ENCODE measurements at regions of chr10 and their contacts with region 1.

Region 1: GRCh38 chr10:97334370-97335175 is at the start of gene FRAT2:
- DNase-seq: peak; percentile 80 to 92 (median 88)
- H3K4me3 ChIP-seq: peak within 1 kb of the TSS; percentile 58 to 99 (median 80)
- H3K27ac ChIP-seq: peak within 1 kb of the TSS; percentile 46 to 99 (median 95)
- H3K27me3 ChIP-seq: no peaks in the 10 kb centered on the region
- CTCF ChIP-seq: peak in 13 of 56 donors; percentile 4 to 43 (median 16)
- total RNA-seq, gene FRAT2: 3.9 to 17.4 (median 9.0) TPM

Region 2: DNA sequence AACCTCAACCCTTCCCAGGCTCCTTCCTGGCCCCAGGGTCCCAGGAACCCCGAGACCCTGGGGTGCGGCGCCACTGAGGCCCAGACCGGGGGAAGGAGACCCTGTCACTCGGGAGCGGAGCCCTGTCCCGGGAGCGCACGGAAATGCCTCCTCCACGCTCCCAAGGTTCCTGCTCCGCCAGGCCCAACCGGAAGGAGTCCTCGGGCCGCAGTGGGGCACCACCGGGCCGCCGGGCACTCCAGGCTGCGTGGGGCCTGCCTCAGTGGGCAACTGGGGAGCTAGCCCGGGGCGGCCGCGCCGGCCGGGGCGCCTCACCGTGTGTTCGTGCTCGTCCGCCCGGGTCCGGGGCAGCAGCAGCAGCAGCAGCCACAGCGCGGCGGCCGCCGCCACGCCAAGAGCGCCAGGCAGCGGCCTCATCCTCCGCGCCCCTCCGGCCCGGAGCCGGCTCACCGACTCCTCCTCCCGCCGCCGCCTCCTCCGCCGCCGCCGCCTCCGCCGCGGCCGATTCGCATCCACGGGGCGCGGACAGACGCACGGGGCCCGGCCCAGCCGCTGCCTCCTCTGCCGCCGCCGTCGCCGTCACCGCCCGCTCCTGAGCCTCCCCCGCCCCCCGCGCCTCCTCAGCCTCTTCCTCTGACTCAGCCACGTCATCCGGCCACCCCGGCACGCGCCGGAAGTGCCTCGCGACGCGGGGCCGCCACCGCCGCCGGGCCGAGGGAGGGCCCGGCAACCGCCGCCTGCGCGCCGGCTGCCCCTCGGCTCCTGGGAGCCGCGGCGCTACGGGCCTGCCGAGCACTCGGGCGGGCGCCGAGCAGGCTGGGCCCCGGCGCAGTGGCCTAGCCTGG is 747.9 kb before region 1 on chr10 and contains the start of gene TM9SF3:
- intact Hi-C with region 1: loop called in 1 of 2 experiments (anchors 10 kb)
- DNase-seq: peak; percentile 78 to 94 (median 88)
- H3K4me3 ChIP-seq: peak within 1 kb of the TSS; percentile 62 to 99 (median 92)
- H3K27ac ChIP-seq: peak within 1 kb of the TSS; percentile 55 to 98 (median 94)
- H3K27me3 ChIP-seq: no peaks in the 10 kb centered on the region
- CTCF ChIP-seq: peak in 12 of 56 donors; percentile 4 to 26 (median 12)
- total RNA-seq, gene TM9SF3: 52.7 to 101 (median 73.9) TPM

Region 3: GRCh38 chr10:97278491-97278989 is 56.0 kb before region 1 on chr10:
- intact Hi-C with region 1: loop called in 1 of 2 experiments (anchors 2 kb)
- DNase-seq: no peak
- H3K4me3 ChIP-seq: no peak overlapping the region
- H3K27ac ChIP-seq: peak overlapping the region in 29 of 59 donors; percentile 1 to 63 (median 30)
- H3K27me3 ChIP-seq: no peaks in the 10 kb centered on the region
- CTCF ChIP-seq: peak; percentile 49 to 86 (median 75)

Region 4: GRCh38 chr10:97292097-97292862 is 42.3 kb before region 1 on chr10 and contains the start of gene ARHGAP19:
- intact Hi-C with region 1: loop called (anchors 5 kb)
- DNase-seq: peak; percentile 84 to 98 (median 95)
- H3K4me3 ChIP-seq: peak within 1 kb of the TSS; percentile 75 to 100 (median 95)
- H3K27ac ChIP-seq: peak within 1 kb of the TSS; percentile 76 to 99 (median 93)
- H3K27me3 ChIP-seq: no peaks in the 10 kb centered on the region
- CTCF ChIP-seq: peak in 16 of 56 donors; percentile 6 to 27 (median 12)
- total RNA-seq, gene ARHGAP19: 3.1 to 20.2 (median 8.4) TPM

Region 5: GRCh38 chr10:97318772-97319651 is 15.6 kb before region 1 on chr10 and contains the start of gene FRAT1:
- intact Hi-C with region 1: loop called (anchors 1 kb)
- DNase-seq: peak; percentile 81 to 91 (median 88)
- H3K4me3 ChIP-seq: peak within 1 kb of the TSS; percentile 66 to 92 (median 77)
- H3K27ac ChIP-seq: peak within 1 kb of the TSS; percentile 78 to 100 (median 98)
- H3K27me3 ChIP-seq: no peaks in the 10 kb centered on the region
- CTCF ChIP-seq: peak in 9 of 56 donors; percentile 7 to 28 (median 16)
- total RNA-seq, gene FRAT1: 3.9 to 10.3 (median 6.2) TPM

Region 6: DNA sequence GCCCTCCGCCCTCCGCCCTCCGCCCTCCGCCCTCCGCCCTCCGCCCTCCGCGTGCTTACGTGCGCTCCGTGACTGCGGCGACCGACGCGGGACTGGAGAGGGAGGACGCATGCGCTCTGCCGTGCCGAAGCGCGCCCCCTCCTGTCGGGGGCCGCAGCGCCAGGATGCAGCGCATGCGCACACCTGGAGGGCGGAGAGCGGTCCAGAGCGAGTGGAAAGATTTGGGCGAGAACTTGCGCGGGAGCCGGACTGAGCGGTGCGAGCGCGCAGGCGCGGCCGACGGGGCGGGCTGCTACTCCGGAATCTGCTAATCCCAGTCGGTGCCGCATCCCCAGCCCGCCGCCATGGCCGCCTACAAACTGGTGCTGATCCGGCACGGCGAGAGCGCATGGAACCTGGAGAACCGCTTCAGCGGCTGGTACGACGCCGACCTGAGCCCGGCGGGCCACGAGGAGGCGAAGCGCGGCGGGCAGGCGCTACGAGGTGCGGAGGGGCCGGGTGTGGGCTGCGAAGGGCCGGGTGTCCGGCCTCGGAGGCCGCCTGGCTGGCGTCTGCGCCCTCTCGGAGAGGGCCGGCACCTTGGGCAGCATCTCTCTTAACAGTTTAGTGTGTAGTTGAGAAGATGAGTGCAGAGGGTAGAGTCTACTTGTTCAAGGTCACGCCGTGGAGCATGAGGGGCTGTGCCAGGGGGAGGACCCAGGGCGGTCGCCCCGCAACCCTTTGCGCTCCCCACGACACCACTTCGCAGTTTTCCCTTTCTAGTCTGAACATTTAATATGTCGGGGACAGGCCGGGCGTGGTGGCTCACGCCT is 91.6 kb after region 1 on chr10 and contains the start of gene PGAM1:
- intact Hi-C with region 1: loop called in 1 of 2 experiments (anchors 10 kb)
- DNase-seq: peak; percentile 88 to 97 (median 94)
- H3K4me3 ChIP-seq: peak within 1 kb of the TSS; percentile 58 to 99 (median 95)
- H3K27ac ChIP-seq: peak within 1 kb of the TSS; percentile 58 to 96 (median 90)
- H3K27me3 ChIP-seq: no peaks in the 10 kb centered on the region
- CTCF ChIP-seq: peak; percentile 46 to 80 (median 68)
- total RNA-seq, gene PGAM1: 155 to 477 (median 341) TPM